A549 (cell line): ENCODE measurements at regions of chr19 and their contacts with region 1.

Region 1: GRCh38 chr19:42468273-42468796 is 25.6 kb upstream of the CXCL17 start:
- DNase-seq: peak in 1 of 2 experiments; percentile 55
- ATAC-seq: peak; percentile 41 to 67; a peak in 4 of 6 replicates
- H3K4me3 ChIP-seq: no peak overlapping the region
- H3K27ac ChIP-seq: peak overlapping the region in 1 of 2 experiments; percentile 34; a peak in 2 of 6 replicates
- H3K4me1 ChIP-seq: peaks cover 33% of the 10 kb centered on the region
- CTCF ChIP-seq: no peak
- EP300 ChIP-seq: no peak
- POLR2A ChIP-seq: no peak
- RAD21 ChIP-seq: no peak

Region 2: GRCh38 chr19:42455621-42456081 is 12.7 kb before region 1 on chr19:
- CTCF ChIA-PET with region 1: interaction called, 92 read pairs
- POLR2A ChIA-PET with region 1: interaction called, 4 read pairs
- DNase-seq: peak; percentile 70 to 83
- ATAC-seq: peak; percentile 83 to 87
- H3K4me3 ChIP-seq: no peak overlapping the region
- H3K27ac ChIP-seq: no peak overlapping the region; a peak in 1 of 6 replicates
- H3K4me1 ChIP-seq: peaks cover 12% of the 10 kb centered on the region
- CTCF ChIP-seq: no peak
- EP300 ChIP-seq: no peak
- POLR2A ChIP-seq: no peak
- RAD21 ChIP-seq: no peak; a peak in 1 of 5 replicates